Activated CD8-positive, alpha-beta T cell treated with anti-CD3 and anti-CD28 coated beads for 36 hours (primary cell): ENCODE measurements at regions of chr4 and their contacts with region 1.

Region 1: GRCh38 chr4:70993181-70994068 is at the start of gene DCK:
- DNase-seq: peak; percentile 86
- ATAC-seq: peak; percentile 81
- H3K4me3 Mint-ChIP-seq: peak within 1 kb of the TSS; percentile 94
- H3K27ac Mint-ChIP-seq: peak within 1 kb of the TSS; percentile 94
- H3K4me1 Mint-ChIP-seq: peaks cover 34% of the 10 kb centered on the region
- H3K27me3 Mint-ChIP-seq: no peaks in the 10 kb centered on the region
- CTCF ChIP-seq: no peak
- total RNA-seq, gene DCK: 33.6 to 37.2 TPM

Region 2: GRCh38 chr4:70901984-70902576 is 91.3 kb before region 1 on chr4 and contains the start of gene MOB1B:
- CTCF ChIA-PET with region 1: interaction called, 8 read pairs
- POLR2A ChIA-PET with region 1: interaction called, 3 read pairs
- intact Hi-C with region 1: loop called (anchors 5 kb)
- DNase-seq: peak; percentile 93
- ATAC-seq: peak; percentile 95
- H3K4me3 Mint-ChIP-seq: peak within 1 kb of the TSS; percentile 94
- H3K27ac Mint-ChIP-seq: peak within 1 kb of the TSS; percentile 89
- H3K4me1 Mint-ChIP-seq: peaks cover 17% of the 10 kb centered on the region
- H3K27me3 Mint-ChIP-seq: no peaks in the 10 kb centered on the region
- CTCF ChIP-seq: peak; percentile 26
- total RNA-seq, gene MOB1B: 14.9 to 19.7 TPM

Region 3: GRCh38 chr4:70943114-70943513 is 50.3 kb before region 1 on chr4:
- CTCF ChIA-PET with region 1: no interaction called
- POLR2A ChIA-PET with region 1: no interaction called
- intact Hi-C with region 1: no loop called
- DNase-seq: no peak
- ATAC-seq: peak; percentile 49
- H3K4me3 Mint-ChIP-seq: no peak overlapping the region
- H3K27ac Mint-ChIP-seq: no peak overlapping the region
- H3K4me1 Mint-ChIP-seq: peaks cover 18% of the 10 kb centered on the region
- H3K27me3 Mint-ChIP-seq: no peaks in the 10 kb centered on the region
- CTCF ChIP-seq: no peak

Region 4: DNA sequence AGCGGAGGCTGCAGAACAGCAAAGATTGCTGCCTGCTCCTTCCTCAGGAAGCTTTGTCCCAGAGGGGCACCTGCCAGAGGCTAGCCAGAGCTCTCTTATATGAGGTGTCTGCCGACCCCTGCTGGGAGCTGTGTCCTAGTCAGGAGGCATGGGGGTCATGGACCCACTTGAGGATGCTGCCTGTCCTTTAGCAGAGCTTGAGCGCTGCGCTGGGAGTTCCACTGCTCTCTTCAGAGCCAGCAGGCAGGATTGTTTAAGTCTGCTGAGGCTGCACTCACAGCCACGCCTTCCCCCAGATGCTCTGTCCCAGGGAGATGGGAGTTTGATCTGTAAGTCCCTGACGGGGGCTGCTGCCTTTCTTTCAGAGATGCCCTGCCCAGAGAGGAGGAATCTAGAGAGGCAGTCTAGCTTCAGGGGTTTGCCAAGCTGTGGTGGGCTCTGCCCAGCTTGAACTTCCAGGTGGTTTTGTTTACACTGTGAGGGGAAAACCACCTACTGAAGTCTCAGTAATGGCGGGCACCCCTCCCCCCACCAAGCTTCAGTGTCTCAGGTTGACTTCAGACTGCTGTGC is 10.9 kb after region 1 on chr4:
- CTCF ChIA-PET with region 1: interaction called, 59 read pairs
- POLR2A ChIA-PET with region 1: interaction called, 12 read pairs
- intact Hi-C with region 1: no loop called
- DNase-seq: peak; percentile 87
- ATAC-seq: peak; percentile 69
- H3K4me3 Mint-ChIP-seq: peak overlapping the region; percentile 36
- H3K27ac Mint-ChIP-seq: peak overlapping the region; percentile 67
- H3K4me1 Mint-ChIP-seq: peaks cover 86% of the 10 kb centered on the region
- H3K27me3 Mint-ChIP-seq: no peaks in the 10 kb centered on the region
- CTCF ChIP-seq: no peak

Region 5: GRCh38 chr4:71009890-71010588 is 16.6 kb after region 1 on chr4:
- CTCF ChIA-PET with region 1: interaction called, 59 read pairs
- POLR2A ChIA-PET with region 1: interaction called, 9 read pairs
- intact Hi-C with region 1: no loop called
- DNase-seq: no peak
- ATAC-seq: peak; percentile 46
- H3K4me3 Mint-ChIP-seq: no peak overlapping the region
- H3K27ac Mint-ChIP-seq: peak overlapping the region; percentile 80
- H3K4me1 Mint-ChIP-seq: peaks cover 42% of the 10 kb centered on the region
- H3K27me3 Mint-ChIP-seq: no peaks in the 10 kb centered on the region
- CTCF ChIP-seq: peak; percentile 80